Breast epithelium (tissue), 4 donors: ENCODE measurements at regions of chr13 and their contacts with region 1.

Region 1: DNA sequence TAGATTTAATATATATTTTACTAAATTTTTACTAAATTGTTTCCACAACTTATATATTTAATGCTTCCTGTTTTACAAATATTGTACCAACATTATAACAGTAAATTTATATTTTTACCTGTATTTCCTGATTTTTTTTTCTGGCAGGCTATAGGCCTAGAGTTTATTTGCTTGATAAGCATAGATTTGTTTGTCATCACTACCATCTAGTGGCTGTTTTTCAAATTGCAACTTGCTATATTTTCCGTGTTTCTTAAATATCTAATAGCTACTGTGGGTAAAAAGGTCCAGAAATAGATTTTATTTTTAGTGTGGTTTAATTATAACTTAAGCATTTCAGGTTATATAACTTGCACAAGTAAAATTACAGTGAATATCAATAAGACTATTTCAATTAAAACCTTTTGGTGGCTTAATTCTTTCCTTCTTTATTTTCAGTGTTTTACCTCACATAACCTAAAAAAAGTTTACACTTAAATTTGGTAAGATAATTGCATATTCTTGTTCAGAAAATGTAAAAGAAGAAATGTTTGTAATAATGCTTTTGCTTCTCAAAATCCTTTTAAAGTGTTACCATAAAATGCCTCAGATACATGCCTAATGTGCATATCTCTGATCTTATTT is 60.6 kb downstream of the NDFIP2 start:
- DNase-seq: no peak
- H3K4me3 ChIP-seq: no peak overlapping the region
- H3K27ac ChIP-seq: no peak overlapping the region
- H3K4me1 ChIP-seq: no peaks in the 10 kb centered on the region
- H3K27me3 ChIP-seq: no peaks in the 10 kb centered on the region
- CTCF ChIP-seq: peak; percentile 89 to 93 (median 92)
- POLR2A ChIP-seq: no peak

Region 2: GRCh38 chr13:79423801-79424642 is 117.5 kb before region 1 on chr13:
- intact Hi-C with region 1: loop called (anchors 10 kb)
- DNase-seq: no peak
- H3K4me3 ChIP-seq: no peak overlapping the region
- H3K27ac ChIP-seq: no peak overlapping the region
- H3K4me1 ChIP-seq: no peaks in the 10 kb centered on the region
- H3K27me3 ChIP-seq: no peaks in the 10 kb centered on the region
- CTCF ChIP-seq: peak in 2 of 3 donors; percentile 58 to 78
- POLR2A ChIP-seq: no peak

Region 3: DNA sequence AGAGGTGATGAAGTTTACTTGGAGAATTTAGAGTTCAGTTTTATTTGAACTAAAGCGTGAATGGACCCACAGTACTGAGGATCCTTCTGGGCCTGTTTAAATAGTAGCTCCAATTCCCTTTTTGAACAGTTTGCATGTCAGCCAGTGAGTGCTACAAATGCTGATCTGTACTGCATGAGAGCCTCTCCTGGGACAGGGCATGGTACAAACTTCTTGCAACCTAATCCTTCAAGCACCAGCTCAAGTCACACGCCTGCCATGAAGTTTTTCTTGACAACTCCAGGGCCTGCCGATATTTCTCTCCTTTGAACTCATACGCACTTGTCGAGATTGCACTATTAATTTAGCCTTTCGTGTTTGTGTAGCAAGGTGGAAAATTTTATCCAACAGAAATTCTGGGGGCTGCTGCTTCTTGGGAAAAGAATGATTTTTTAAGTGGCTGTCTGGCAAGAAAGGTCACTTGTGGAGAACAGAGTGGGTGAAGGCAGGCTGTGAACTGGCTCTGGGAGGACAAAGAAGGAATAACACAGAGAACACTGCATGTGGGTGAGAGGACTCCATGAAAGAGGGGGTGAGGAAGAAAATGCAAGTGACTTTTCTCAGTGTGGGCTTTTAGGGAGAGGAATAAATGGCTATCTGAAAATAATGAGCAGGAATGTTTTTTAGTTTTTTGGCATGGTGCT is 131.9 kb after region 1 on chr13:
- intact Hi-C with region 1: no loop called
- DNase-seq: no peak
- H3K4me3 ChIP-seq: no peak overlapping the region
- H3K27ac ChIP-seq: no peak overlapping the region
- H3K4me1 ChIP-seq: no peaks in the 10 kb centered on the region
- H3K27me3 ChIP-seq: no peaks in the 10 kb centered on the region
- CTCF ChIP-seq: no peak
- POLR2A ChIP-seq: no peak